CD8-positive, alpha-beta T cell (primary cell): ENCODE measurements at regions of chr9 and their contacts with region 1.

Region 1: DNA sequence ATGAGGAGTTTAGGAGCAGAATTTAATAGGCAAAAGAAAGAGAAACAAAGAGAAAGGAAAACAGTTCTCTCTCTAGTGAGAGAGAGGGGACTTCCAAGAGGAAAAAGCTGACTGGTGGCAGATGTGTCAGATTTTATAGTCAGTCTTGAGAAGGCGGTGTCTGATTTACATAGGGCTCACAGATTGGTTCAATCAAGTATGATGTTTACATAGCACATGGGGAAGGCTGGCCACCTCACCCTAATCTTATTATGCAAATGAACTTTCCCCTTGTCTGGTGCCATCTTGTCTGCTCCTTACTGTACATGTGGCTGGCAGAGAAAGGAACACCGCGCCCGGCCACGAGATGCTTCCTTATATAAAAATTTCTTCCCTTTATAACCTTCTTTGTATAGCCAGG is 24.7 kb downstream of the UNC13B start:
- DNase-seq: no peak
- ATAC-seq: no peak
- H3K4me3 ChIP-seq: no peak overlapping the region
- H3K4me3 Mint-ChIP-seq: no peak overlapping the region
- H3K27ac ChIP-seq: no peak overlapping the region
- H3K27ac Mint-ChIP-seq: no peak overlapping the region
- H3K4me1 ChIP-seq: no peaks in the 10 kb centered on the region
- H3K4me1 Mint-ChIP-seq: no peaks in the 10 kb centered on the region
- H3K27me3 ChIP-seq: no peaks in the 10 kb centered on the region
- H3K27me3 Mint-ChIP-seq: no peaks in the 10 kb centered on the region
- CTCF ChIP-seq: no peak

Region 2: GRCh38 chr9:35198191-35198590 is 11.7 kb after region 1 on chr9:
- CTCF ChIA-PET with region 1: no interaction called
- POLR2A ChIA-PET with region 1: no interaction called
- intact Hi-C with region 1: loop called in 1 of 2 experiments (anchors 1 kb)
- DNase-seq: no peak
- ATAC-seq: no peak
- H3K4me3 ChIP-seq: no peak overlapping the region
- H3K4me3 Mint-ChIP-seq: no peak overlapping the region
- H3K27ac ChIP-seq: no peak overlapping the region
- H3K27ac Mint-ChIP-seq: no peak overlapping the region
- H3K4me1 ChIP-seq: no peaks in the 10 kb centered on the region
- H3K4me1 Mint-ChIP-seq: no peaks in the 10 kb centered on the region
- H3K27me3 ChIP-seq: no peaks in the 10 kb centered on the region
- H3K27me3 Mint-ChIP-seq: peaks cover 8% of the 10 kb centered on the region
- CTCF ChIP-seq: no peak